ENCODE measurements at regions of chr10 and their contacts with region 1.

Region 1: DNA sequence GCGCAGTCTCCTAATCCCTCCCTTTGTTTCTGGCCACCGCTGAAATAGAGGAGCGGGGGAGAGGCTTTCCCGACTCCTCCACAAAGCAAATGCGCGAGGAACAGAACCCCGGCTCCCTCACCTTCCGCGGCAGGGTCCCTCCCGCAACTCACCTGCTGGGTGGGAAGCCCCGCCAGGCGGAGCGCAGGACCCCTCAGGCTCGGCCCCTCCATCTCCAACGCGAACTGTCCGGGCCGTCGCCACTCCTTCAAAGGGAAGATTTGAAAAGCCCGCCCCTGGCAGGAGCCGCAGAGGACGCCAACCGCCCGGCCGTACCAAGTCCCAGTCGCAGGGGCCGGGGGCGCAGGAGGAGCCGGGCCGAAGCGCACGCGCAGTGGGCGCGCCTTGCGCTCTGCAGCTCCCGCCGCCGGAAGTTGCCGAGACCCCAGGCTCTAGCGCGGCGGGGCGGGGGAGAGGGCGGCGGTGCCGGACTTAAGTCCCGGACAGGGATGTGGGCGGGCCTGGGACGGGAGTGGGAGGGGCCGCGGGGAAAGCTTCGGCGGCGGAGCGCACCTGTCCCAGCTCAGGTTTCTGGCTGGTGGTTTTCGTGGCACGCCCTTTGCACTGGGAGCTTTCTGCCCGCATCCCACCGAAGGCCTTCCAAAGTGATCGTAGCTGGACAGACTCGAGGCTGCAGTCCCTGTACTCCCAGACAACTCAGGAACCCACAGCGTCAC is at the start of gene RTKN2:
- DNase-seq: peak; percentile 52 to 76 (median 64)
- ATAC-seq: peak; percentile 89
- H3K4me3 ChIP-seq: peak within 1 kb of the TSS; percentile 69
- H3K4me3 Mint-ChIP-seq: peak within 1 kb of the TSS; percentile 84 to 96 (median 88)
- H3K27ac ChIP-seq: peak within 1 kb of the TSS; percentile 12
- H3K27ac Mint-ChIP-seq: peak within 1 kb of the TSS in 8 of 9 donors; percentile 8 to 75 (median 46)
- H3K4me1 ChIP-seq: peaks cover 0 to 5% of the 10 kb centered on the region in 2 donors
- H3K4me1 Mint-ChIP-seq: peaks cover 9 to 19% (median 14%) of the 10 kb centered on the region in 7 donors
- H3K27me3 ChIP-seq: peaks cover 0 to 9% of the 10 kb centered on the region in 2 donors
- H3K27me3 Mint-ChIP-seq: peaks cover 4 to 43% (median 16%) of the 10 kb centered on the region in 5 donors
- total RNA-seq, gene RTKN2: 1.4 to 7.8 (median 3.0) TPM

Region 2: DNA sequence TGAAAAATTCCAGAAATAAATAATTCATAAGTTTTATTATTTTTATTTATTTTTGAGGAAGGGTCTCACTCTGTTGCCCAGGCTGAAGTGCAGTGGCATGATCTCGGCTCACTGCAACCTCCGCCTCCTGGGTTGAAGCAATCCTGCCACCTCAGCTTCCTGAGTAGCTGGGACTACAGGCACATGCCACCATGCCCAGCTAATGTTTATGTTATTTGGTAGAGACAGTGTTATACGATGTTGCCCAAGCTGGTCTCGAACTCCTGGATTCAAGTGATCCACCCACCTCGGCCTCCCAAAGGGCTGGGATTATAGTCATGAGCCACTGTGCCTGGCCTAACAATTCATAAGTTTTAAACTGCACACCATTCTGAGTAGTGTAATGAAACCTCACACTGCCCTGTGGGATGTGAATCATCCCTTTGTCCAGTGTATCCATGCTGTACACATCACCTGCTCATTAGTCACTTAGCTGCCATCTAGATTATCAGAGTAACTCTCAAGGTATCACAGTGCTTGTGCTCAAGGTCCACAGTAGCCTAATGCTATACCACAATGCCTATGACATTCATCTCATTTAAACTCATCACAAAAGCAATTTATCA is 17.9 kb before region 1 on chr10:
- CTCF ChIA-PET with region 1: interaction called, 4 read pairs
- POLR2A ChIA-PET with region 1: no interaction called
- intact Hi-C with region 1: loop called in 1 of 2 experiments (anchors 2 kb)
- DNase-seq: no peak
- ATAC-seq: no peak
- H3K4me3 ChIP-seq: no peak overlapping the region
- H3K4me3 Mint-ChIP-seq: no peak overlapping the region
- H3K27ac ChIP-seq: no peak overlapping the region
- H3K27ac Mint-ChIP-seq: no peak overlapping the region
- H3K4me1 ChIP-seq: no peaks in the 10 kb centered on the region
- H3K4me1 Mint-ChIP-seq: peaks cover 0 to 5% (median 0%) of the 10 kb centered on the region in 7 donors
- H3K27me3 ChIP-seq: no peaks in the 10 kb centered on the region
- H3K27me3 Mint-ChIP-seq: no peaks in the 10 kb centered on the region

Region 3: DNA sequence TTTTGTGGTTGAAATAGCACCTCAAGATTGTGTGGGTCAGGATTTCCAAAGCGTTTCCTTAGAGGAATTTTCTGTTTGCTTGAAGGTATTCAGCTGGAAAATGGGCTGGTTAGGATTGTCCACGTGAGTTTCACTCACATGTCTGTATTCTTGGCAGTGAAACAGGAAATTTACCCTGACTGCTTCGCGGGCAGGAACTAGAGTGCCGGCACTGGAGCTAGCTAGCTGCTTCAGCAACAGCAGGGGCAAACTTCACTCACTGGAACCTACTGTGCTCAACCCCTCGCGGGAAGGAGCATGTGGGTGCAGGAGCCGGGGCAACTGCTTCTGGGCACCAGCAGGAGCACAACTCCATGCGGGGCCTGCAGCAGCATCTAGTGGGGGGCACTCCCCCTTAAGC is 38.1 kb after region 1 on chr10:
- CTCF ChIA-PET with region 1: no interaction called
- POLR2A ChIA-PET with region 1: no interaction called
- intact Hi-C with region 1: loop called in 1 of 2 experiments (anchors 2 kb)
- DNase-seq: peak in 7 of 9 donors; percentile 7 to 38 (median 24)
- ATAC-seq: peak; percentile 62
- H3K4me3 ChIP-seq: no peak overlapping the region
- H3K4me3 Mint-ChIP-seq: peak overlapping the region in 8 of 10 donors; percentile 16 to 66 (median 45)
- H3K27ac ChIP-seq: no peak overlapping the region
- H3K27ac Mint-ChIP-seq: peak overlapping the region in 5 of 9 donors; percentile 13 to 53 (median 46)
- H3K4me1 ChIP-seq: peaks cover 9 to 30% of the 10 kb centered on the region in 2 donors
- H3K4me1 Mint-ChIP-seq: peaks cover 5 to 47% (median 34%) of the 10 kb centered on the region in 7 donors
- H3K27me3 ChIP-seq: no peaks in the 10 kb centered on the region
- H3K27me3 Mint-ChIP-seq: peaks cover 0 to 7% (median 0%) of the 10 kb centered on the region in 5 donors

Region 4: GRCh38 chr10:62373995-62374861 is 105.7 kb after region 1 on chr10 and contains the start of gene ZNF365:
- CTCF ChIA-PET with region 1: no interaction called
- POLR2A ChIA-PET with region 1: no interaction called
- intact Hi-C with region 1: loop called (anchors 5 to 10 kb)
- DNase-seq: peak in 8 of 9 donors; percentile 5 to 51 (median 22)
- ATAC-seq: peak; percentile 85
- H3K4me3 ChIP-seq: peak within 1 kb of the TSS; percentile 54
- H3K4me3 Mint-ChIP-seq: peak within 1 kb of the TSS; percentile 71 to 85 (median 78)
- H3K27ac ChIP-seq: no peak within 1 kb of the TSS
- H3K27ac Mint-ChIP-seq: peak within 1 kb of the TSS in 1 of 9 donors; percentile 65
- H3K4me1 ChIP-seq: peaks cover 3 to 18% of the 10 kb centered on the region in 2 donors
- H3K4me1 Mint-ChIP-seq: peaks cover 0 to 9% (median 7%) of the 10 kb centered on the region in 7 donors
- H3K27me3 ChIP-seq: no peaks in the 10 kb centered on the region
- H3K27me3 Mint-ChIP-seq: peaks cover 15 to 48% (median 31%) of the 10 kb centered on the region in 5 donors
- total RNA-seq, gene ZNF365: 0.08 to 2.9 (median 0.28) TPM in 4 of 5 experiments, not detected in the other

Region 5: GRCh38 chr10:62414359-62414758 is 145.8 kb after region 1 on chr10:
- CTCF ChIA-PET with region 1: no interaction called
- POLR2A ChIA-PET with region 1: no interaction called
- intact Hi-C with region 1: loop called in 1 of 2 experiments (anchors 1 kb)
- DNase-seq: no peak
- ATAC-seq: no peak
- H3K4me3 ChIP-seq: no peak overlapping the region
- H3K4me3 Mint-ChIP-seq: no peak overlapping the region
- H3K27ac ChIP-seq: no peak overlapping the region
- H3K27ac Mint-ChIP-seq: no peak overlapping the region
- H3K4me1 ChIP-seq: no peaks in the 10 kb centered on the region
- H3K4me1 Mint-ChIP-seq: no peaks in the 10 kb centered on the region
- H3K27me3 ChIP-seq: no peaks in the 10 kb centered on the region
- H3K27me3 Mint-ChIP-seq: peaks cover 28 to 58% (median 36%) of the 10 kb centered on the region in 5 donors

Measured in naive thymus-derived CD4-positive, alpha-beta T cell (primary cell).